T-cell (primary cell): ENCODE measurements at regions of chr3 and their contacts with region 1.

Region 1: GRCh38 chr3:128680602-128681368 is 30.2 kb upstream of the RPN1 start:
- DNase-seq: peak; percentile 93 to 97 (median 95)
- ATAC-seq: peak; percentile 87 to 94 (median 92)
- H3K4me3 ChIP-seq: peak overlapping the region; percentile 79 to 80
- H3K4me3 Mint-ChIP-seq: peak overlapping the region; percentile 95 to 99 (median 97)
- H3K27ac ChIP-seq: peak overlapping the region; percentile 97
- H3K27ac Mint-ChIP-seq: peak overlapping the region; percentile 99
- H3K4me1 ChIP-seq: peaks cover 17 to 30% of the 10 kb centered on the region in 2 experiments
- H3K4me1 Mint-ChIP-seq: peaks cover 27 to 55% (median 29%) of the 10 kb centered on the region in 3 donors
- H3K27me3 ChIP-seq: no peaks in the 10 kb centered on the region
- H3K27me3 Mint-ChIP-seq: no peaks in the 10 kb centered on the region

Region 2: GRCh38 chr3:128447561-128448013 is 233.2 kb before region 1 on chr3:
- CTCF ChIA-PET with region 1: no interaction called
- POLR2A ChIA-PET with region 1: no interaction called
- DNase-seq: peak in 13 of 35 experiments; percentile 3 to 36 (median 12)
- ATAC-seq: peak in 1 of 4 experiments; percentile 13
- H3K4me3 ChIP-seq: no peak overlapping the region
- H3K4me3 Mint-ChIP-seq: no peak overlapping the region
- H3K27ac ChIP-seq: no peak overlapping the region
- H3K27ac Mint-ChIP-seq: peak overlapping the region in 1 of 2 donors; percentile 83
- H3K4me1 ChIP-seq: peaks cover 0 to 19% of the 10 kb centered on the region in 2 experiments
- H3K4me1 Mint-ChIP-seq: peaks cover 26 to 32% (median 27%) of the 10 kb centered on the region in 3 donors
- H3K27me3 ChIP-seq: peaks cover 0 to 22% of the 10 kb centered on the region in 2 experiments
- H3K27me3 Mint-ChIP-seq: peaks cover 3 to 11% of the 10 kb centered on the region in 2 donors

Region 3: DNA sequence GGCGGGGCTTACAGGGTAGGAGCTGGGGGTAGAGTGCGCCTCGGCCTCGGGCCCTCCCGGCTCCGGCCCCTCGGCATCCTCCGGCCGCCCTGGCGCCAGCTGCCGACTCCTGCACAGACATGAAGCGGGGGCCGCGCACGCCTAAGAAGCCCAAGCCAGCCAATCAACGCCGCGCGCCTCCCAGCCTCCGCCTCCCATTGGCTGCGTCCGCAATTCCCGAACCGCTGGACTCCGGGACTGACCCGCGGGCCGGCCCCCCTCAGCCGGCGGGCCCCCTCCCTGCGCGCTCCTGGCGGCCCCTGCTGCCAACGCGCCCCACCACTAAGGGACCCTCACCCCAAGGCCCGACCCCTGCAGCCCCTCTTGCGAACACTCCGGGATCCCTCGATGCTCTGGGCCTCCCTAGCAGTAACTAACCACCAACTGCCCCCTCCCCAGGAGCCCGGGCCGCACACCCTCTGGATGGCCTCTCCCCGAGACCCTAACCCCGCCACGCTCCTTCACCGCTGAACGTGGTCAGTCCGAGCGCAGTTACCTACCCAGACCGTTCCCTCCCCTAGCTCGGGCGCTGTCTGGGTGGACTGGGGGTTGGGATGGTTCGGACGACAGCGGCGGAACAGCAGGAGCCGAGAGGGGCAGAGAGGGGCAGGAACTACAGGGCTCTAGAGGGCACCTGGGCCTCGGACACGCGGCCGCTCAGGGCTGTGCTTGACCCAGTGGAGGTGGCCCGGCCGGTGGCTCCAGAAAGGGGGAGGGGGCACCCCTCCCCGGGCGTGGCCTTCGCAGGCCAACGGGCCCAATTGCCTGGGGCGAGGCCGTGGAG is 192.8 kb before region 1 on chr3:
- CTCF ChIA-PET with region 1: no interaction called
- POLR2A ChIA-PET with region 1: no interaction called
- DNase-seq: peak in 2 of 35 experiments; percentile 20 to 34
- ATAC-seq: peak; percentile 15 to 31 (median 18)
- H3K4me3 ChIP-seq: peak overlapping the region; percentile 34 to 64
- H3K4me3 Mint-ChIP-seq: peak overlapping the region; percentile 50 to 85 (median 81)
- H3K27ac ChIP-seq: no peak overlapping the region
- H3K27ac Mint-ChIP-seq: no peak overlapping the region
- H3K4me1 ChIP-seq: peaks cover 10 to 81% of the 10 kb centered on the region in 2 experiments
- H3K4me1 Mint-ChIP-seq: peaks cover 43 to 55% (median 48%) of the 10 kb centered on the region in 3 donors
- H3K27me3 ChIP-seq: peaks cover 0 to 98% of the 10 kb centered on the region in 2 experiments
- H3K27me3 Mint-ChIP-seq: peaks cover 44 to 76% of the 10 kb centered on the region in 2 donors

Region 4: GRCh38 chr3:128617557-128618397 is 63.0 kb before region 1 on chr3:
- CTCF ChIA-PET with region 1: interaction called, 3 to 15 read pairs
- POLR2A ChIA-PET with region 1: interaction called in 1 of 2 experiments, 7 read pairs
- DNase-seq: peak; percentile 90 to 100 (median 99)
- ATAC-seq: peak; percentile 89 to 94 (median 90)
- H3K4me3 ChIP-seq: peak overlapping the region; percentile 90 to 95
- H3K4me3 Mint-ChIP-seq: peak overlapping the region; percentile 82 to 96 (median 87)
- H3K27ac ChIP-seq: peak overlapping the region; percentile 88
- H3K27ac Mint-ChIP-seq: peak overlapping the region; percentile 89 to 93
- H3K4me1 ChIP-seq: peaks cover 10 to 35% of the 10 kb centered on the region in 2 experiments
- H3K4me1 Mint-ChIP-seq: peaks cover 24 to 32% (median 30%) of the 10 kb centered on the region in 3 donors
- H3K27me3 ChIP-seq: no peaks in the 10 kb centered on the region
- H3K27me3 Mint-ChIP-seq: no peaks in the 10 kb centered on the region

Region 5: GRCh38 chr3:128787256-128788240 is 106.8 kb after region 1 on chr3:
- CTCF ChIA-PET with region 1: interaction called, 3 to 28 read pairs
- POLR2A ChIA-PET with region 1: no interaction called
- DNase-seq: peak in 20 of 35 experiments; percentile 17 to 68 (median 27)
- ATAC-seq: peak; percentile 29 to 81 (median 64)
- H3K4me3 ChIP-seq: no peak overlapping the region
- H3K4me3 Mint-ChIP-seq: peak overlapping the region; percentile 74 to 78 (median 77)
- H3K27ac ChIP-seq: peak overlapping the region; percentile 84
- H3K27ac Mint-ChIP-seq: peak overlapping the region; percentile 98 to 99
- H3K4me1 ChIP-seq: peaks cover 47 to 67% of the 10 kb centered on the region in 2 experiments
- H3K4me1 Mint-ChIP-seq: peaks cover 83 to 95% (median 89%) of the 10 kb centered on the region in 3 donors
- H3K27me3 ChIP-seq: no peaks in the 10 kb centered on the region
- H3K27me3 Mint-ChIP-seq: no peaks in the 10 kb centered on the region

Region 6: DNA sequence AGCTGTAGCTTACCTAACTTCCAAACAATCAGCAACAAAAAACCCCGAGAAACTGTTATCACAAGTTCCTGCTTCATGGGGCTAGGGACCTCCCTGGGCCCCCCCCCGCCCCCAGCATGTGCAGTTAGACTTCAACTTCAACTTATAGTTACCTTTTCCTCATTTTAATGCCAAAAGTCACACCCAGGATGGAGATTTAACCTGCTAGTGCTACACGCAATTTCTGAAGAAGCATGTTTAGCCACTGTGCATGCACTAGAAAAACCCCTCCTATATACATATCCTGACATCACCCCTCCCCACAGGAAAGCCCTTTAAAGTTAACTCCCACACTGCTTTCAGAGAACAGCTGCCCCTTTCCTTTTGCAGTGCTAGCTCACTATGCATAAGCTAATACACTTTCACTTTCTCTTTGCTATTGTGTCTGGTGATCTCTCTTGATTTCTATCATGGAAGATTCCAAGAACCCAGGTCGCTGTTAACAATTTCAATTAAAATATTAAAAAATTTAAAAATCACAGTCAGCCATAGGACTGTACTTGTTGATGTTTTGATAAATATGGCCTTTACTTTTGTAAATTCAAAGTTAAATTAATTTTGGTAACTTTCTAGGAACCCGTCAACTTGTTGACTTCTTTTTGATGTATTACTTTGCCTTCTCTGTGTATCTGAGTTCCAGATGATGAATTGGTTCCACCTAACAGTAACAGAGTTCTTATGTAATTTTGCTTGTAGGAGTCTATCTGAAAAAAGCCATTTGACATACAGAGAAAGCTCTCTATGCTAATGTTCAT is 123.4 kb after region 1 on chr3:
- CTCF ChIA-PET with region 1: interaction called, 4 to 36 read pairs
- POLR2A ChIA-PET with region 1: interaction called in 1 of 2 experiments, 6 read pairs
- DNase-seq: peak; percentile 15 to 87 (median 60)
- ATAC-seq: peak; percentile 90 to 95 (median 94)
- H3K4me3 ChIP-seq: peak overlapping the region; percentile 32 to 34
- H3K4me3 Mint-ChIP-seq: peak overlapping the region; percentile 71 to 75 (median 72)
- H3K27ac ChIP-seq: peak overlapping the region; percentile 86
- H3K27ac Mint-ChIP-seq: peak overlapping the region; percentile 90 to 94
- H3K4me1 ChIP-seq: peaks cover 33 to 36% of the 10 kb centered on the region in 2 experiments
- H3K4me1 Mint-ChIP-seq: peaks cover 79 to 82% (median 80%) of the 10 kb centered on the region in 3 donors
- H3K27me3 ChIP-seq: no peaks in the 10 kb centered on the region
- H3K27me3 Mint-ChIP-seq: no peaks in the 10 kb centered on the region

Region 7: GRCh38 chr3:128879125-128879969 is 198.6 kb after region 1 on chr3 and contains the start of gene ACAD9:
- CTCF ChIA-PET with region 1: interaction called in 1 of 2 experiments, 15 read pairs
- POLR2A ChIA-PET with region 1: interaction called, 3 read pairs
- DNase-seq: peak; percentile 90 to 98 (median 93)
- ATAC-seq: peak; percentile 91 to 94 (median 94)
- H3K4me3 ChIP-seq: peak within 1 kb of the TSS; percentile 67 to 97
- H3K4me3 Mint-ChIP-seq: peak within 1 kb of the TSS; percentile 71 to 90 (median 83)
- H3K27ac ChIP-seq: peak within 1 kb of the TSS; percentile 96
- H3K27ac Mint-ChIP-seq: peak within 1 kb of the TSS; percentile 90 to 97
- H3K4me1 ChIP-seq: peaks cover 17 to 60% of the 10 kb centered on the region in 2 experiments
- H3K4me1 Mint-ChIP-seq: peaks cover 70 to 80% (median 70%) of the 10 kb centered on the region in 3 donors
- H3K27me3 ChIP-seq: no peaks in the 10 kb centered on the region
- H3K27me3 Mint-ChIP-seq: no peaks in the 10 kb centered on the region
- total RNA-seq, gene ACAD9: 45.1 to 91.5 (median 54.3) TPM